Gastrocnemius medialis (tissue), 4 donors: ENCODE measurements at regions of chr10 and their contacts with region 1.

Region 1: DNA sequence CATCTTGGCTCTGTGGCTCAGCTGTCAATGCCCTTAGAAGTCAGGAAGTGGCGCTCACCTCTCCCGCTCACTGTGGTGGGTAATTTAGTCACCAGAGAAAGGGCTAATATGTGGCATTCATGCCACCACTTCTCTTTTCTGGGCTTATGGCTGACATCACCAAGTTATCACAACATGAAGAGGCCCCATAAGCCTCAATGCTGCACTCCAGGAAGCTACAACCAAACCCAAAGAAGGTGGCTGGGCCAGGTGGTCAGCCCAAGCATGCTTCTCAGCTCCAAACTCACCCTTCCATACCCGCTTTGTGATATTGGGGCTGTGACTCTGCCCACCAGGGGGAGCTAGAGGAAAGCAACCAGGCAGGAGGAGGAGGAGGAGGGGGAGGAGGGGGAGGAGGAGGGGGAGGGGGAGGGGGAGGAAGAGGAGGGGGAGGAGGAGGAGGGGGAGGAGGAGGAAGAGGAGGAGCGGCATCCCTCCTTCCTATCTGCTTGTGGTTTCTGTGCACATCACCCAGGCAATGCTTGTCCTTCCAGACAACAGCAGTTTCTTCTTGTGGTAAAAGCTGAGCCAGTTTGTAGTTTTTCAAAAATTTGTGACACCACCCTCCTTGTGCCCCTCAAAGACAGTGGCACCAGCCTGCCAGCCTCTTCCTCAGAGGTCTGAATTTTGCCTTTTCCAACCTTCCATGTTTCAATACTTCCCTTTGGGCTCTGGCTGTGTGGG is 42.1 kb downstream of the CYP26A1 start:
- DNase-seq: peak; percentile 10 to 31
- ATAC-seq: no peak
- H3K4me3 ChIP-seq: no peak overlapping the region
- H3K27ac ChIP-seq: no peak overlapping the region
- H3K4me1 ChIP-seq: no peaks in the 10 kb centered on the region
- H3K27me3 ChIP-seq: no peaks in the 10 kb centered on the region
- CTCF ChIP-seq: peak in 3 of 5 experiments; percentile 23 to 38 (median 29)
- POLR2A ChIP-seq: no peak

Region 2: DNA sequence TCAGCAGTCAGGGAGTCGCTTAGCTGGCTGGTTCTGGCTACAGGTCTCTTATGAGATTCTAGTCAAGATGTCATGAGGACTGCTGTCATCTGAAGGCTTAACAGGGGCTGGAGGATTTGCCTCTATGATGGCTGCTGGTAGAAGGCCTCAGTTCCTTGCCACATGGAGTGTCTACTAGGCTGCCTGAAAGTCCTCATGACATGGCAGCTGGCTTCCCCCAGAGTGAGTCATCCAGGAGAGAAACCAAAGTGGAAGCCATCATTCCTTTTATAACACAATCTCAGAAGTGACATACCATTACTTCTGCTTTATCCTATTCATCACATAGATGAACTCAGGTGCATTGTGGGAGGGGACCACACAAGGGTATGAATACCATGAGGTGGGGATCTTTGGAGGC is 192.4 kb before region 1 on chr10:
- in situ Hi-C with region 1: no loop called
- intact Hi-C with region 1: no loop called
- DNase-seq: no peak
- ATAC-seq: no peak
- H3K4me3 ChIP-seq: no peak overlapping the region
- H3K27ac ChIP-seq: no peak overlapping the region
- H3K4me1 ChIP-seq: no peaks in the 10 kb centered on the region
- H3K27me3 ChIP-seq: no peaks in the 10 kb centered on the region
- CTCF ChIP-seq: no peak
- POLR2A ChIP-seq: no peak

Region 3: GRCh38 chr10:93126484-93127052 is 10.7 kb after region 1 on chr10:
- in situ Hi-C with region 1: no loop called
- intact Hi-C with region 1: no loop called
- DNase-seq: no peak
- ATAC-seq: no peak
- H3K4me3 ChIP-seq: no peak overlapping the region
- H3K27ac ChIP-seq: no peak overlapping the region
- H3K4me1 ChIP-seq: no peaks in the 10 kb centered on the region
- H3K27me3 ChIP-seq: no peaks in the 10 kb centered on the region
- CTCF ChIP-seq: no peak
- POLR2A ChIP-seq: no peak

Region 4: GRCh38 chr10:93288654-93289634 is 173.1 kb after region 1 on chr10:
- in situ Hi-C with region 1: loop called in 3 of 4 experiments (anchors 10 to 25 kb)
- intact Hi-C with region 1: loop called (anchors 5 kb)
- DNase-seq: peak; percentile 4 to 43
- ATAC-seq: peak in 1 of 2 donors; percentile 27
- H3K4me3 ChIP-seq: no peak overlapping the region
- H3K27ac ChIP-seq: no peak overlapping the region
- H3K4me1 ChIP-seq: no peaks in the 10 kb centered on the region
- H3K27me3 ChIP-seq: no peaks in the 10 kb centered on the region
- CTCF ChIP-seq: peak; percentile 34 to 69 (median 55)
- POLR2A ChIP-seq: no peak

Region 5: GRCh38 chr10:93293999-93294398 is 178.2 kb after region 1 on chr10:
- in situ Hi-C with region 1: loop called in 3 of 4 experiments (anchors 10 to 25 kb)
- intact Hi-C with region 1: loop called (anchors 5 kb)
- DNase-seq: no peak
- ATAC-seq: no peak
- H3K4me3 ChIP-seq: no peak overlapping the region
- H3K27ac ChIP-seq: no peak overlapping the region
- H3K4me1 ChIP-seq: no peaks in the 10 kb centered on the region
- H3K27me3 ChIP-seq: no peaks in the 10 kb centered on the region
- CTCF ChIP-seq: no peak
- POLR2A ChIP-seq: no peak

Region 6: GRCh38 chr10:93352638-93353383 is 237.0 kb after region 1 on chr10:
- in situ Hi-C with region 1: no loop called
- intact Hi-C with region 1: loop called (anchors 5 kb)
- DNase-seq: no peak
- ATAC-seq: no peak
- H3K4me3 ChIP-seq: no peak overlapping the region
- H3K27ac ChIP-seq: no peak overlapping the region
- H3K4me1 ChIP-seq: no peaks in the 10 kb centered on the region
- H3K27me3 ChIP-seq: no peaks in the 10 kb centered on the region
- CTCF ChIP-seq: peak; percentile 36 to 72 (median 54)
- POLR2A ChIP-seq: no peak

Region 7: DNA sequence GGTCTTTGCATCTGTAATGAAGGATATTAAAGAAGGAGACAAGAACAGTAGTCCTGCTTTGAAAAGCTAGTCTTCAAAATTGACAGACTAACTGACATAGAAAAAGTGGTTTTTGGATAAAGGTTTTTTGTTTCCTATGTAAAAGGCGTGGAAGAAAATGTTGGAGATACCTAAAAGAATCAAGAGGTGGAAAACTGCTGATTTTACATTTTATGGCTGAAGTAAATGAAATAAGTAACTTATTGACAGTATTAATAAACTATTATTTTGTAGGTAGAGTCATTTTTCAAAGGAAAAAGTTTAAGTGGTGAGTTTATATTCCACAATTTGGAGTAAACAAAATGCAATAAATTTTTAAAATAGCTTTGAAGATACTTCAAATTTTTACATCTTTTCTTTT is 1417.2 kb after region 1 on chr10:
- in situ Hi-C with region 1: no loop called
- intact Hi-C with region 1: no loop called
- DNase-seq: no peak
- ATAC-seq: no peak
- H3K4me3 ChIP-seq: no peak overlapping the region
- H3K27ac ChIP-seq: no peak overlapping the region
- H3K4me1 ChIP-seq: no peaks in the 10 kb centered on the region
- H3K27me3 ChIP-seq: no peaks in the 10 kb centered on the region
- CTCF ChIP-seq: no peak
- POLR2A ChIP-seq: no peak